Caco-2 (cell line): ENCODE measurements at regions of chr10 and their contacts with region 1.

Region 1: GRCh38 chr10:17430647-17431355 is 23.6 kb downstream of the ST8SIA6 start:
- DNase-seq: peak; percentile 78 to 82
- H3K4me3 ChIP-seq: no peak overlapping the region
- H3K4me3 Mint-ChIP-seq: no peak overlapping the region
- H3K27ac Mint-ChIP-seq: no peak overlapping the region
- H3K4me1 ChIP-seq: peaks cover 4% of the 10 kb centered on the region
- H3K4me1 Mint-ChIP-seq: peaks cover 19% of the 10 kb centered on the region
- H3K27me3 ChIP-seq: no peaks in the 10 kb centered on the region; the same call in 1 of the 2 replicates
- H3K27me3 Mint-ChIP-seq: peaks cover 8% of the 10 kb centered on the region
- CTCF ChIP-seq: peak; percentile 97 to 99

Region 2: GRCh38 chr10:16828114-16828568 is 602.7 kb before region 1 on chr10:
- CTCF ChIA-PET with region 1: no interaction called
- POLR2A ChIA-PET with region 1: no interaction called
- intact Hi-C with region 1: loop called (anchors 2 kb)
- DNase-seq: peak; percentile 66 to 75
- H3K4me3 ChIP-seq: no peak overlapping the region
- H3K4me3 Mint-ChIP-seq: no peak overlapping the region
- H3K27ac Mint-ChIP-seq: no peak overlapping the region
- H3K4me1 ChIP-seq: no peaks in the 10 kb centered on the region
- H3K4me1 Mint-ChIP-seq: no peaks in the 10 kb centered on the region
- H3K27me3 ChIP-seq: no peaks in the 10 kb centered on the region
- H3K27me3 Mint-ChIP-seq: peaks cover 3% of the 10 kb centered on the region
- CTCF ChIP-seq: peak; percentile 63 to 78

Region 3: GRCh38 chr10:16843252-16843870 is 587.4 kb before region 1 on chr10:
- CTCF ChIA-PET with region 1: no interaction called
- POLR2A ChIA-PET with region 1: no interaction called
- intact Hi-C with region 1: loop called (anchors 5 kb)
- DNase-seq: peak in 1 of 2 experiments; percentile 69
- H3K4me3 ChIP-seq: no peak overlapping the region
- H3K4me3 Mint-ChIP-seq: no peak overlapping the region
- H3K27ac Mint-ChIP-seq: no peak overlapping the region
- H3K4me1 ChIP-seq: no peaks in the 10 kb centered on the region
- H3K4me1 Mint-ChIP-seq: no peaks in the 10 kb centered on the region
- H3K27me3 ChIP-seq: no peaks in the 10 kb centered on the region; the same call in 1 of the 2 replicates
- H3K27me3 Mint-ChIP-seq: peaks cover 9% of the 10 kb centered on the region
- CTCF ChIP-seq: peak; percentile 58 to 81

Region 4: GRCh38 chr10:17290226-17290625 is 140.6 kb before region 1 on chr10:
- CTCF ChIA-PET with region 1: interaction called, 4 read pairs
- POLR2A ChIA-PET with region 1: no interaction called
- intact Hi-C with region 1: loop called (anchors 1 kb)
- DNase-seq: peak in 1 of 2 experiments; percentile 63
- H3K4me3 ChIP-seq: no peak overlapping the region
- H3K4me3 Mint-ChIP-seq: no peak overlapping the region
- H3K27ac Mint-ChIP-seq: no peak overlapping the region
- H3K4me1 ChIP-seq: no peaks in the 10 kb centered on the region
- H3K4me1 Mint-ChIP-seq: peaks cover 6% of the 10 kb centered on the region
- H3K27me3 ChIP-seq: no peaks in the 10 kb centered on the region
- H3K27me3 Mint-ChIP-seq: peaks cover 14% of the 10 kb centered on the region
- CTCF ChIP-seq: peak; percentile 60 to 80

Region 5: GRCh38 chr10:17348501-17349349 is 82.1 kb before region 1 on chr10:
- CTCF ChIA-PET with region 1: no interaction called
- POLR2A ChIA-PET with region 1: no interaction called
- intact Hi-C with region 1: loop called (anchors 5 kb)
- DNase-seq: no peak
- H3K4me3 ChIP-seq: no peak overlapping the region
- H3K4me3 Mint-ChIP-seq: no peak overlapping the region
- H3K27ac Mint-ChIP-seq: no peak overlapping the region
- H3K4me1 ChIP-seq: peaks cover 13% of the 10 kb centered on the region; the same call in 1 of the 2 replicates
- H3K4me1 Mint-ChIP-seq: peaks cover 1% of the 10 kb centered on the region
- H3K27me3 ChIP-seq: no peaks in the 10 kb centered on the region
- H3K27me3 Mint-ChIP-seq: no peaks in the 10 kb centered on the region
- CTCF ChIP-seq: no peak

Region 6: DNA sequence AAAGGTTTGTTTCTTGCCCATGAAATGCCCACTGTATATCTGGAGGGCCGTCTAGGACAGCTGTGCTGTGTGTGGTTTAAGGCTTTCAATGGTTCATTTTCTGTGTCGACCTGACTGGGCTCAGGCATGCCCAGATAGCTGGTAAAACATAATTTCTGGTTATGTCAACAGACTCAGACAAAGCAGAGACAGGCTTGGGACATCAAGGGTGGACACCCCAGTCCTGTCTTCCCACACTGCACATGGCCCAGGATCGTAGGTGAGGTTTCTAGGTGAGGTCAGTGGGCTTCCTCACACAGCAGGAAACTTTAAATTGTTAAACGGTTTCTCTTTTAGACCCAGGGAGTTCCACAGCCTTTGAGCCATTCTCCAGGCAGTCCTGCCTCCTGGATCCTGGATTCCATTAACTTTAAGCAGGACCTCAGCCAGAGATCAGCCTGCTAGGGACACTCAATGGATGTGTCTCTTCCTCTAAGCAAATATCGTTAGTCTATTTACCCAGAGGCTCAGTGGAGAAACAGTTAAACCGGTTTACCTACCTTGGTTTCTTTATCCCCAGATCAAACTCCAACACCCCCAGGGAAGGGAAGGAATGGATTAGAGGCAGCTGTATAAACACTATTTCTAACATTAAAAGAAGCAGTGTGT is 42.8 kb before region 1 on chr10:
- CTCF ChIA-PET with region 1: no interaction called
- POLR2A ChIA-PET with region 1: no interaction called
- intact Hi-C with region 1: loop called (anchors 1 kb)
- DNase-seq: peak; percentile 92 to 96
- H3K4me3 ChIP-seq: no peak overlapping the region; the same call in 1 of the 2 replicates
- H3K4me3 Mint-ChIP-seq: peak overlapping the region; percentile 57
- H3K27ac Mint-ChIP-seq: peak overlapping the region; percentile 48
- H3K4me1 ChIP-seq: peaks cover 34% of the 10 kb centered on the region
- H3K4me1 Mint-ChIP-seq: peaks cover 25% of the 10 kb centered on the region
- H3K27me3 ChIP-seq: no peaks in the 10 kb centered on the region
- H3K27me3 Mint-ChIP-seq: no peaks in the 10 kb centered on the region
- CTCF ChIP-seq: no peak

Region 7: GRCh38 chr10:17409170-17409733 is 21.5 kb before region 1 on chr10:
- CTCF ChIA-PET with region 1: interaction called, 7 read pairs
- POLR2A ChIA-PET with region 1: no interaction called
- intact Hi-C with region 1: loop called (anchors 1 kb)
- DNase-seq: no peak
- H3K4me3 ChIP-seq: no peak overlapping the region
- H3K4me3 Mint-ChIP-seq: no peak overlapping the region
- H3K27ac Mint-ChIP-seq: no peak overlapping the region
- H3K4me1 ChIP-seq: peaks cover 14% of the 10 kb centered on the region
- H3K4me1 Mint-ChIP-seq: peaks cover 9% of the 10 kb centered on the region
- H3K27me3 ChIP-seq: no peaks in the 10 kb centered on the region
- H3K27me3 Mint-ChIP-seq: no peaks in the 10 kb centered on the region
- CTCF ChIP-seq: peak; percentile 16 to 45

Region 8: DNA sequence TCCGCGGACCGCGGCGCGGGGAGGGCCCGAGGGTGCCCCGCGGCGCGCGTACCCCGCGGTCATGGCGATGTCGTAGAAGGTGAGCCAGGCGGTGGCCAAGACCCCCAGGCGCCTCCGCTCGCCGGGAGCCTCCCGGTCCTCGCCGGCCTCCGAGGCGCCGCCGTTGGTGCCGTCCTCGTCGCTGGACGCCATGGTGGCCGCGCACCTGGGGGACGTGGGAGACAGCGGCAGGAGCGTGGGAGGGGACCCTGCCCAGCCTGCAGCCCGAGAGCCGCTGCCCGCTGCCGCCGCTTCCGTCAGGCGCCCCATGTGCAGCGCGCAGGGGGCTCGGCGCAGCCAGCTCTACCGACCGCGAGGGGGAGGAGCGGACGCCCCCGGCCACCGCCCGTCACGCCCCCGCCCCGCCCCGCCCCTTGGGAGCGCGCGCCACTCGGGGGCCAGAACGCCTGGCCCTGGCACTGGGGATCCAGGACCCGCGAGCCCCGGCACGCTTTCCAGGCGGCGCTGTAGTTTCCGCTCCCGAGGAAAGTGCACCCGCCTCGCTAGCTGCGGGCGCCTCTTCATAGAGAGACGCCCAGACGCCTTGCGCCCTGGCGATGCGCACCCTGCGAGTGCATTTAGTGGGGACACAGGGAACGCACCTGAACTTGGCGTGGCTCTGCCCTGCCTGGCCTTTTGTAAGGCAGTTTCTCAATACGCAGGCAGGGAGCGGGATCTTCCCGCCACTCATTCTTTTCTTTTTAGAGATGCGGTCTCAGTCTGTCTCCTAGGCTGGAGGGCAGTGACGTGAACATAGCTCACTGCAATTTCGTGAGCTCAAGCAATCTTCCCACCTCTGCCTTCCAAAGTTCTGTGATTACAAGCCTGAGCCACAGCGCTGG is 186.5 kb after region 1 on chr10 and contains the start of gene HACD1:
- CTCF ChIA-PET with region 1: no interaction called
- POLR2A ChIA-PET with region 1: no interaction called
- intact Hi-C with region 1: no loop called
- DNase-seq: peak; percentile 87 to 92
- H3K4me3 ChIP-seq: peak within 1 kb of the TSS; percentile 98
- H3K4me3 Mint-ChIP-seq: peak within 1 kb of the TSS; percentile 97
- H3K27ac Mint-ChIP-seq: peak within 1 kb of the TSS; percentile 88
- H3K4me1 ChIP-seq: no peaks in the 10 kb centered on the region; the same call in 1 of the 2 replicates
- H3K4me1 Mint-ChIP-seq: peaks cover 5% of the 10 kb centered on the region
- H3K27me3 ChIP-seq: no peaks in the 10 kb centered on the region
- H3K27me3 Mint-ChIP-seq: peaks cover 3% of the 10 kb centered on the region
- CTCF ChIP-seq: peak in 1 of 2 experiments; percentile 62
- total RNA-seq, gene HACD1: 37.2 and 47.8 TPM in 2 replicates